Ovary (tissue), 10 donors: ENCODE measurements at regions of chr6 and their contacts with region 1.

Region 1: GRCh38 chr6:11496152-11497060 is 41.1 kb upstream of the TMEM170B start:
- DNase-seq: peak; percentile 42 to 75 (median 58)
- H3K4me3 ChIP-seq: no peak overlapping the region
- H3K27ac ChIP-seq: no peak overlapping the region
- H3K4me1 ChIP-seq: no peaks in the 10 kb centered on the region
- H3K27me3 ChIP-seq: no peaks in the 10 kb centered on the region
- CTCF ChIP-seq: peak; percentile 49 to 94 (median 93)
- EP300 ChIP-seq: no peak
- POLR2A ChIP-seq: no peak

Region 2: GRCh38 chr6:10991115-10991514 is 505.3 kb before region 1 on chr6:
- intact Hi-C with region 1: no loop called
- DNase-seq: no peak
- H3K4me3 ChIP-seq: no peak overlapping the region
- H3K27ac ChIP-seq: no peak overlapping the region
- H3K4me1 ChIP-seq: no peaks in the 10 kb centered on the region
- H3K27me3 ChIP-seq: no peaks in the 10 kb centered on the region
- CTCF ChIP-seq: no peak
- EP300 ChIP-seq: no peak
- POLR2A ChIP-seq: no peak

Region 3: GRCh38 chr6:11144393-11144851 is 352.0 kb before region 1 on chr6:
- intact Hi-C with region 1: loop called (anchors 2 to 10 kb)
- DNase-seq: peak; percentile 54 to 78 (median 75)
- H3K4me3 ChIP-seq: no peak overlapping the region
- H3K27ac ChIP-seq: no peak overlapping the region
- H3K4me1 ChIP-seq: no peaks in the 10 kb centered on the region
- H3K27me3 ChIP-seq: no peaks in the 10 kb centered on the region
- CTCF ChIP-seq: peak; percentile 53 to 72 (median 63)
- EP300 ChIP-seq: no peak
- POLR2A ChIP-seq: no peak

Region 4: DNA sequence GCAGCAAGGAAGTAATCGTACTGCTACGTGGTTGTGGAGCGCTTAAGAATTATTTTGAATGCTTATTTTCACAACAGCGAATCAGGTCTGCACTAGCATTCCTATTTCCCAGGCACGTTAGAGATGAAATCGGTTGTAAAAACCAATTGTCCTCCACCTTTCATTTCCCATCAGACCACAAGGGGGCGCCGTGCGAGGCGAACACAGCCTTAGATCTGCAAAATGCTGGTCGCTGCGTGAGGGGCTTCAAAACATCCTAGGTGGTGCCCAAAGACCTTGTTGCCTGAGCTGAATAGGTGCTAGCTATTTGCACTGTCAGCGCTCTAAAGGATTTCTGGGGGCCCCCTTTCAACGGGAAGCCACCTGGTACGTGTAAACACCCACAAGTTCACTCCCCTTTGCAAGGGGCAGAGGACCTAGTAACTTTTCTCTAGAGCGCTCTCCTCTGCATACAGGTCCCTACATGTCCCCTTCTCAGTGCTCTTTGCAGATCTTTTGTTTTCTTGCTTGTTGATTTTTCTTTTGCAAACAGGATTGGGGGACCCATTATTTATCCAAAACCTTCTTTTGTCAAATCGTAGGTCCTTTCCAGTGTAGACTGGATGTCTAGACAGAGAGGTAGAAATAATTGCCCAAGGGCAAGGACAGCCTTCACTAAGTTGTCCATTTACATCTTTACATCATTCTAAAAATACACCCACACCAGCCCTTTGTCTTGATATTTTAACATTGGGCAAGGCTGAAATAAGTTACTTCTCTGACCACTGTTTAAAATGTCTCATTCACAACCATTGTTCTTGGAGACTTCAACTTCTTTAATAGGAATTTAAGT is 323.7 kb before region 1 on chr6:
- intact Hi-C with region 1: loop called in 1 of 4 experiments (anchors 10 kb)
- DNase-seq: peak; percentile 31 to 70 (median 66)
- H3K4me3 ChIP-seq: no peak overlapping the region
- H3K27ac ChIP-seq: no peak overlapping the region
- H3K4me1 ChIP-seq: no peaks in the 10 kb centered on the region
- H3K27me3 ChIP-seq: no peaks in the 10 kb centered on the region
- CTCF ChIP-seq: peak; percentile 55 to 62 (median 59)
- EP300 ChIP-seq: no peak
- POLR2A ChIP-seq: no peak

Region 5: DNA sequence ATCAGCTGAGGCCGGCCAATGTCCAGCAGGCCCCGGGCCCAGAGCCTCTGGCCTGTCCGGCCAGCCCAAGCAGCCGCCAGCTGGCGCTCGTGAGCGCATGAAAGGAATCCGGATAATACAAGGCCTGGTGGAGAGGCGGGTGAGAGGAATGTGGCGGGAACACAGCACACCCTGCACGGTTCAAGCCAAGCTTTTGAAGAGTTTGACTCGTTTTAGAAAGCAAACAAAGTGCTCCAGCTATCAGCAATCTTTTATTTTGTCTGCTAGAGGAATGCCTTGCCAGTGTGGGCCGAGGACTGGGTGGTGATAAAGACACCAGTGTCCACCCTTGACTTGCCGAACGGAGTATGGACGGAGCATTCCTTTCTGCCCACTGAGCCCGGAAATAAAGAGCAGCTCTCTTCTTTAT is 254.6 kb before region 1 on chr6:
- intact Hi-C with region 1: loop called in 3 of 4 experiments (anchors 5 kb)
- DNase-seq: peak; percentile 77 to 90 (median 83)
- H3K4me3 ChIP-seq: no peak overlapping the region
- H3K27ac ChIP-seq: no peak overlapping the region
- H3K4me1 ChIP-seq: peaks cover 8% of the 10 kb centered on the region
- H3K27me3 ChIP-seq: no peaks in the 10 kb centered on the region
- CTCF ChIP-seq: peak; percentile 53 to 88 (median 66)
- EP300 ChIP-seq: no peak
- POLR2A ChIP-seq: no peak